Activated T-helper 2 cell treated with anti-CD3 and anti-CD28 coated beads, Interferon-gamma antibody, Interleukin-2, Interleukin-4, amounts not matched to agents 10 μg/mL and 5 μg/mL and 100 μg/mL, durations not matched to agents 14 hours and 24 hours and 36 hours (primary cell): ENCODE measurements at regions of chr9 and their contacts with region 1.

Region 1: DNA sequence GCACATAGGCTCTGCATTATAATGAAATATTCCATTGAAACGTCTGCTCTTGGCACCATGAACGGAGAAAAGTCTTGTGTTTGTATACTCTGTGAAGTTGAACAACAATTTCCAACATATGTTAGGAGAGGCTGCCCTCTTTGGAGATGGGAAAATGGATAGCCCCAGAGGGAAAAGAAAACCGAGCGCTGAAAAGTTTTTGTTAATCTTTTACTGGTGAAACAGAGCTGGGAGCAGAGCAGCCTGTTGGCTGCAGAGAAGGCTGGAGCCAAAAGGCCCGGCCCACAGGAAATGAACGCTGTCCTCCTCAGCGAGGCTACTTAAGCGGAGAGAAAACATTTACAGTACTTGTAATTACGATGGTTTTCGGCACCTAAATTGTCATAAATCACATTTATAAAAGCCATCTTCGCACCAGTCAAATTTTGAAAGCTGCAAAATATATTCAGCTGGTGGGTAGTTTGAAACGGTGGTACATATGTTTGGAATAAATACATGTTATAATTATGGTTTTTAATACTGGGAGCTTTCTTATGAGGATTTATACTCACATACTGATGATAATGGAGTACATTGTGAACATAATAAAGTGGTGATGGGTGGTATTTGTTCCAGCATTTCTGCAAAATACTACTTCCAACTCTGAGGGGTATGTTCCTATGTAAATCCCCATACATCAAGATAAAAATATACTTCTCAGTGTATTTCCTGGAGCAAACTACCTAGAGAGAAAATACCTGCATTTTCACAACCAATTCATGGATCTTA is 129.6 kb upstream of the CNTLN start:
- DNase-seq: no peak
- H3K4me3 Mint-ChIP-seq: no peak overlapping the region
- H3K27ac Mint-ChIP-seq: no peak overlapping the region
- H3K4me1 Mint-ChIP-seq: no peaks in the 10 kb centered on the region
- H3K27me3 Mint-ChIP-seq: no peaks in the 10 kb centered on the region

Region 2: GRCh38 chr9:16671591-16672137 is 333.6 kb before region 1 on chr9:
- intact Hi-C with region 1: no loop called
- DNase-seq: no peak
- H3K4me3 Mint-ChIP-seq: no peak overlapping the region
- H3K27ac Mint-ChIP-seq: no peak overlapping the region
- H3K4me1 Mint-ChIP-seq: no peaks in the 10 kb centered on the region
- H3K27me3 Mint-ChIP-seq: no peaks in the 10 kb centered on the region

Region 3: GRCh38 chr9:16970321-16970720 is 34.9 kb before region 1 on chr9:
- intact Hi-C with region 1: no loop called
- DNase-seq: no peak
- H3K4me3 Mint-ChIP-seq: no peak overlapping the region
- H3K27ac Mint-ChIP-seq: no peak overlapping the region
- H3K4me1 Mint-ChIP-seq: no peaks in the 10 kb centered on the region
- H3K27me3 Mint-ChIP-seq: no peaks in the 10 kb centered on the region

Region 4: GRCh38 chr9:16985559-16986348 is 19.5 kb before region 1 on chr9:
- intact Hi-C with region 1: loop called (anchors 2 kb)
- DNase-seq: no peak
- H3K4me3 Mint-ChIP-seq: no peak overlapping the region
- H3K27ac Mint-ChIP-seq: no peak overlapping the region
- H3K4me1 Mint-ChIP-seq: no peaks in the 10 kb centered on the region
- H3K27me3 Mint-ChIP-seq: no peaks in the 10 kb centered on the region